ENCODE measurements at regions of chr6 and their contacts with region 1.

Region 1: GRCh38 chr6:138455746-138456400 is 43.4 kb downstream of the NHSL1 start:
- DNase-seq: peak; percentile 77
- H3K4me3 Mint-ChIP-seq: peak overlapping the region; percentile 60
- H3K27ac Mint-ChIP-seq: peak overlapping the region; percentile 64
- H3K4me1 Mint-ChIP-seq: peaks cover 24% of the 10 kb centered on the region
- H3K27me3 Mint-ChIP-seq: no peaks in the 10 kb centered on the region

Region 2: DNA sequence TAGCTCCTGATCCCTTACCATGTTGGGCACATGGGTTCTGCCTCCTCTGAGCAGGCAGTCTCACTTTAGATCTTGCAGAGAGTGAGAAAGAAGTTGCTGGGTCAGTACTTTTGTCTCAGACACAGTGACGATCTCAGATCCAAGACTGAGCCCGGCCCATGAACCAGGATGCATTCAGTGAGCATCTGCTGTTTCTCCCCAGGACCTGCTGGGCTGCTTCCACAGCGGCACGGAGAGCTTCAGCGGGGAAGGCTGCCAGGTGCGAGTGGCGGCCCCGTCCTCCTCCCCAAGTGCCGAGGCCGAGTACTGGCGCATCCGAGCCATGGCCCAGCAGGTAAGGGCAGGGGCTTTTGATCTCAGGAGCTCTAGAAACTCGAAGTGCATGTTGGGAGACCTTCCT is 132.1 kb before region 1 on chr6:
- intact Hi-C with region 1: no loop called
- DNase-seq: no peak
- H3K4me3 Mint-ChIP-seq: no peak overlapping the region
- H3K27ac Mint-ChIP-seq: no peak overlapping the region
- H3K4me1 Mint-ChIP-seq: no peaks in the 10 kb centered on the region
- H3K27me3 Mint-ChIP-seq: no peaks in the 10 kb centered on the region

Region 3: GRCh38 chr6:138410972-138411667 is 44.8 kb before region 1 on chr6:
- intact Hi-C with region 1: loop called (anchors 2 kb)
- DNase-seq: peak; percentile 69
- H3K4me3 Mint-ChIP-seq: peak overlapping the region; percentile 44
- H3K27ac Mint-ChIP-seq: peak overlapping the region; percentile 85
- H3K4me1 Mint-ChIP-seq: peaks cover 22% of the 10 kb centered on the region
- H3K27me3 Mint-ChIP-seq: no peaks in the 10 kb centered on the region

Measured in activated CD4-positive, alpha-beta T cell treated with anti-CD3 and anti-CD28 coated beads, Interleukin-2, amount 10 ng/mL, durations not matched to agents 24 days and 14 days (primary cell).